Gastrocnemius medialis (tissue), 4 donors: ENCODE measurements at regions of chrX and their contacts with region 1.

Region 1: GRCh38 chrX:16719334-16720084 is at the start of gene SYAP1:
- DNase-seq: peak; percentile 89 to 94
- ATAC-seq: peak; percentile 97 to 98
- H3K4me3 ChIP-seq: peak within 1 kb of the TSS; percentile 62 to 94 (median 81)
- H3K27ac ChIP-seq: peak within 1 kb of the TSS; percentile 85 to 95 (median 90)
- H3K4me1 ChIP-seq: peaks cover 0 to 27% of the 10 kb centered on the region in 2 donors
- H3K27me3 ChIP-seq: no peaks in the 10 kb centered on the region
- CTCF ChIP-seq: no peak
- POLR2A ChIP-seq: peak; percentile 95
- total RNA-seq, gene SYAP1: 10.6 to 26.4 (median 16.9) TPM

Region 2: GRCh38 chrX:15789979-15790768 is 929.3 kb before region 1 on chrX and contains the start of gene ZRSR2:
- in situ Hi-C with region 1: loop called in 1 of 4 experiments (anchors 25 kb)
- intact Hi-C with region 1: loop called (anchors 1 kb)
- DNase-seq: peak; percentile 52 to 72
- ATAC-seq: peak; percentile 89 to 95
- H3K4me3 ChIP-seq: peak within 1 kb of the TSS; percentile 71 to 78 (median 76)
- H3K27ac ChIP-seq: peak within 1 kb of the TSS; percentile 73 to 86 (median 82)
- H3K4me1 ChIP-seq: peaks cover 7 to 10% of the 10 kb centered on the region in 2 donors
- H3K27me3 ChIP-seq: no peaks in the 10 kb centered on the region
- CTCF ChIP-seq: no peak
- POLR2A ChIP-seq: peak; percentile 41 to 54
- total RNA-seq, gene ZRSR2: 3.9 to 8.4 (median 6.9) TPM

Region 3: GRCh38 chrX:15854712-15855567 is 864.6 kb before region 1 on chrX and contains the start of gene AP1S2:
- in situ Hi-C with region 1: no loop called
- intact Hi-C with region 1: loop called (anchors 5 kb)
- DNase-seq: peak; percentile 85 to 91
- ATAC-seq: peak; percentile 88
- H3K4me3 ChIP-seq: peak within 1 kb of the TSS; percentile 60 to 74 (median 68)
- H3K27ac ChIP-seq: peak within 1 kb of the TSS; percentile 87 to 94 (median 92)
- H3K4me1 ChIP-seq: peaks cover 15 to 26% of the 10 kb centered on the region in 2 donors
- H3K27me3 ChIP-seq: peaks cover 0 to 18% (median 0%) of the 10 kb centered on the region in 3 donors
- CTCF ChIP-seq: no peak
- POLR2A ChIP-seq: peak; percentile 75 to 82
- total RNA-seq, gene AP1S2: 79.8 to 155 (median 122) TPM

Region 4: GRCh38 chrX:16786139-16786790 is 66.8 kb after region 1 on chrX and contains the start of gene TXLNG:
- in situ Hi-C with region 1: loop called in 1 of 4 experiments (anchors 10 kb)
- intact Hi-C with region 1: loop called (anchors 1 kb)
- DNase-seq: peak; percentile 97 to 98
- ATAC-seq: peak; percentile 97 to 99
- H3K4me3 ChIP-seq: peak within 1 kb of the TSS; percentile 68 to 84 (median 74)
- H3K27ac ChIP-seq: peak within 1 kb of the TSS; percentile 91 to 93 (median 92)
- H3K4me1 ChIP-seq: peaks cover 3 to 7% of the 10 kb centered on the region in 2 donors
- H3K27me3 ChIP-seq: no peaks in the 10 kb centered on the region
- CTCF ChIP-seq: no peak
- POLR2A ChIP-seq: peak; percentile 87 to 92
- total RNA-seq, gene TXLNG: 6.9 to 16.9 (median 9.6) TPM

Region 5: DNA sequence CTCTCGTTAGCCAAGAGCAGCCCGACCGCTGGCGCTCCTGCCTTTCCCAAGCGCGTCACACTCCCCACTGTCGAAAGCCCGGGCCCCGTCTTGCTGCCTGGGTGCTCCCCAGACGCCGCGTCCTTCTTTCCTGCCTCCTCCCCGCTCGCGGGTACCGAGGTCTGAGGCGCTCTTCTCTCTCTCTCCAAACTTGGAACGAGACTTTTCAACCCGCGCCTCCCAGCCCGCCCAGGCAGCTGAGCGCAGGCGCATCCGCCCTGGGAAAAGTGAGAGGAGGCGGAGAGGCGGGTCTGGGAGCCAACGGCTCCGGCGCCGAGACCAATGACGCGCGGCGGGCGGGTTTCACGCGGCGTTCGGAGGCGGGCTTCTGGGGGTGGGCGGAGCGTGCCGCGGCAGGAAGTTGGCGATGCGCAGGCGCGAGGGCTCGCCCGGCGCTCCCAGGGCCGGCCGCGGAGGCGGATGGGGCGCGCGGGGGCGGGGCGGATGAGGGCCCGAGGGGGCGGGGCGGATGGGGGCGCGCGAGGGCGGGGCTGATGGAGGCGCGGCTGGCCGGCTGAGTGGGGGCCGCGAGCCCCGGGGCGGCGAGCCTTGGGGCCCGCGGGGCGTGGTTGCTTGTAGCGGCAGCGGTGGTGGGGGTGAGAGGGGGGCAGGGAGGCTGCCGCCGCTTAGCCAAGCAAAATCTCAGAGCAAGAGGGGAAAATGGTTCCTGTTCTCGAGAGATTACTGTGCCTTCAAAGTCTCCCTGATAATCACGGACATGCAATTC is 150.8 kb after region 1 on chrX and contains the start of gene RBBP7:
- in situ Hi-C with region 1: loop called in 1 of 4 experiments (anchors 25 kb)
- intact Hi-C with region 1: loop called (anchors 1 kb)
- DNase-seq: peak; percentile 85 to 89
- ATAC-seq: peak; percentile 83
- H3K4me3 ChIP-seq: peak within 1 kb of the TSS; percentile 64 to 84 (median 70)
- H3K27ac ChIP-seq: peak within 1 kb of the TSS; percentile 90 to 98 (median 95)
- H3K4me1 ChIP-seq: peaks cover 11 to 17% of the 10 kb centered on the region in 2 donors
- H3K27me3 ChIP-seq: peaks cover 0 to 8% (median 6%) of the 10 kb centered on the region in 3 donors
- CTCF ChIP-seq: no peak
- POLR2A ChIP-seq: peak; percentile 88 to 93
- total RNA-seq, gene RBBP7: 95.0 to 325 (median 151) TPM

Region 6: GRCh38 chrX:16882702-16883486 is 163.4 kb after region 1 on chrX:
- in situ Hi-C with region 1: loop called in 1 of 4 experiments (anchors 25 kb)
- intact Hi-C with region 1: no loop called
- DNase-seq: peak; percentile 33 to 63
- ATAC-seq: peak; percentile 80 to 85
- H3K4me3 ChIP-seq: peak overlapping the region; percentile 45 to 71 (median 51)
- H3K27ac ChIP-seq: peak overlapping the region; percentile 75 to 81 (median 79)
- H3K4me1 ChIP-seq: peaks cover 4 to 8% of the 10 kb centered on the region in 2 donors
- H3K27me3 ChIP-seq: peaks cover 0 to 23% (median 14%) of the 10 kb centered on the region in 3 donors
- CTCF ChIP-seq: peak; percentile 38 to 66 (median 49)
- POLR2A ChIP-seq: peak in 1 of 2 donors; percentile 25